OCI-LY7 (cell line): ENCODE measurements at regions of chr10 and their contacts with region 1.

Region 1: DNA sequence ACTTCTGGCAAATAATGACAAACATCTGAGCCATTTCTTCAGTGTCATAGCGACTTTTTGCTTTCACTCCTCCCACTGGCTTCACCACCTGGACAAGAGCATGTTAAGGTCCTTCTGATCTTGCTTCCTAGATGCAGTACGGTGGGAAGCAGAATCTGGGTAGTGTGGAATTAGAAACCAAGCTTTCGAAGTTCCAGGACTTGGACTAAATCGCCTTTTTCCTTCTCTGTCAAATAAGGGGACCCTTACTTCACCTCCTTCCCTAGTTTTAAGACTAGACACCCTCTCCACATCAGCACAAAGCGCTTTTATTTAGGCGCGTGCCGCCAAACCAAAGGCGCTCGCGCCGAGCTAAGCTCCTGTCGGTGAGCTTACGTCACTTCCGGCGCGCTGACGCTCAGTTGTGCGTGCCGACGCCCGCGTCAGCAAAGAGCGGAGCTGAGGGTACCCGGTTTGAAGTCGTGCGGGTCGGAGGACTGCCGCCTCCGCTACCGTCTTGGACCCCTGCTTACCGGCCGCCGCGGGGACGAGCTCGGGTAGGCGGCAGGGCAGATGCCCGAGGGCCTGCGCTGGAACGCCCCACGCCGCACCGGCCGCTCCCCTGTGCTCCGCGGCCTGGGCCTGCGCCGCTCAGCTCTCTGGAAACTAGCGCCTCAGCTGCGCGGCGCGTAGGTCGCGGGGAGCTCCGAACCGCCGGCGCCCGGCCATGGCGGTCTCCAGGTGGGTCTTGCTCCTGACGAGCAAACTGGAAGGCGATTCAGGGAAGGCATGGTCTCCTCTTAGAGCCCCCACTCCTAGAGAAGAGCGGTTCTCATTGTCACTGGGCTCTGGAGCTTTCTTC is at the start of gene BTAF1:
- DNase-seq: peak; percentile 97
- H3K4me3 ChIP-seq: peak within 1 kb of the TSS; percentile 82
- H3K27ac ChIP-seq: peak within 1 kb of the TSS; percentile 73
- H3K4me1 ChIP-seq: peaks cover 27% of the 10 kb centered on the region
- CTCF ChIP-seq: no peak
- total RNA-seq, gene BTAF1: 95.6 and 100 TPM in 2 replicates

Region 2: DNA sequence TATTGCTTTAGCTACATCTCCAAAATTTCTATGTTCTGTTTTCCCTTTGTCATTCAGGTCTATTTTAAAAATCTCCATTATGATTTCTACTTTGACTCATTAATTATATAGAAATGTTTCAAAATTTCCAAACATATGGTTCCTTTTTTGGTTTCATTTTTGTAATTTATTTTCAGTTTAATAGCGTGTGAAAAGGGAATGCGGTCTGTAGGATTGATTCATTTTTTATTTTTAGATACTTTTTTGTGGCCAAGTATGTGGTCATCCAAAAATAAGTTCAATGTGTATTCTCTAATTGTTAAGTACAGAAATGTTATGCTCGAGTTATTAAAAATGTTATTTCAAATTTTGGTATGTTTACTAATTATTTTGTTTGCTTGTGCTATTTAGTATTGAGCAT is 930.3 kb before region 1 on chr10:
- CTCF ChIA-PET with region 1: interaction called, 11 read pairs
- POLR2A ChIA-PET with region 1: no interaction called
- intact Hi-C with region 1: no loop called
- DNase-seq: no peak
- H3K4me3 ChIP-seq: no peak overlapping the region
- H3K27ac ChIP-seq: no peak overlapping the region
- H3K4me1 ChIP-seq: no peaks in the 10 kb centered on the region
- CTCF ChIP-seq: no peak